Activated CD4-positive, alpha-beta memory T cell treated with anti-CD3 and anti-CD28 coated beads for 36 hours (primary cell): ENCODE measurements at regions of chr14 and their contacts with region 1.

Region 1: DNA sequence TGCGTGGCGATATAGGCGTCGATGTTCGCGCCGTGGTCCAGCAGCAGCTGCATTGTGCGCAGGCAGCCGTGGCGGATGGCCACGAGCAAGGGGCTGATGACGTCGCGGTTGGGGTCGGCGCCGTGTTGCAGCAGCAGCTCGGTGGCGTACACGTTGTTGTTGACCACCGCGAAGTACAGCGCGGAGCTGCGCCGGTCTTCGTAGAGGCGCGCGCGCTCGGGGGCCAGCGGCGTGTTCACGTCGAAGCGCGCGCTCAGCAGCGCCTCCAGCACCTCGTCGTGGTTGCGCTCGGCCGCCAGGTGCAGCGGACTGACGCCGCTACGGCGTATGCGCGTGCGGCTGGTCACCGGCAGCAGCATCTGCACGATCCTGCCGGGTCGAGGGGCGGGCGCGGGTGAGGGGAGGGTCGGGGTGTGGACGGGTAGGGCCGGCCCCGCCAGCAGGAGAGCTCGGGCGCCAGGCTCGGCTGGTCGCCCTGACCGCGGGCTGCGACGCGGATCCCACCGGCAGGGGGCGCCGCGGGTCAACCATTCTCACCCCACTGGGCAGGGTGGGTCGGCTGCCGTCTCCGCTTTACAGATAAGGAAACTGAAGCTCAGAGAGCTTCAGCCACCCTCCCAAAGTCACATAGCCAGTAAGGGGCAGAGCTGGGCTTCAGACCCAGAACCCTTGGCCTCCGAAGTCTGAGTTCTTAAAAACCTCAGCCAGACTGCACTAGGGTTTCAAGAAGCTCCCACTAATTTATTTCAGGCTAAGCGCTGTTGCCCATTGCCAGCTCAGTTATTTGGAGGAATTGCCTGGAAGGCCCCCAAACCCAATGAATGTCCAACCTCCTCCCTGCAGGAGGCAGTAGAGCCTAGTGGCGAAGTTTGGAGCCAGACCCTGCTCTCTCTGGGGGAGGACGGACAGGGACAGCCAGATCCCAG is 12.4 kb downstream of the FAM181A start:
- DNase-seq: peak; percentile 94
- H3K4me3 Mint-ChIP-seq: peak overlapping the region; percentile 61
- H3K27ac Mint-ChIP-seq: peak overlapping the region; percentile 56
- H3K4me1 Mint-ChIP-seq: peaks cover 13% of the 10 kb centered on the region
- H3K27me3 Mint-ChIP-seq: no peaks in the 10 kb centered on the region

Region 2: GRCh38 chr14:93923626-93924025 is 15.9 kb before region 1 on chr14:
- CTCF ChIA-PET with region 1: interaction called, 10 read pairs
- POLR2A ChIA-PET with region 1: no interaction called
- intact Hi-C with region 1: no loop called
- DNase-seq: no peak
- H3K4me3 Mint-ChIP-seq: no peak overlapping the region
- H3K27ac Mint-ChIP-seq: no peak overlapping the region
- H3K4me1 Mint-ChIP-seq: no peaks in the 10 kb centered on the region
- H3K27me3 Mint-ChIP-seq: no peaks in the 10 kb centered on the region

Region 3: GRCh38 chr14:93989939-93990338 is 50.4 kb after region 1 on chr14:
- CTCF ChIA-PET with region 1: interaction called, 425 read pairs
- POLR2A ChIA-PET with region 1: interaction called, 3 read pairs
- intact Hi-C with region 1: no loop called
- DNase-seq: no peak
- H3K4me3 Mint-ChIP-seq: no peak overlapping the region
- H3K27ac Mint-ChIP-seq: no peak overlapping the region
- H3K4me1 Mint-ChIP-seq: peaks cover 14% of the 10 kb centered on the region
- H3K27me3 Mint-ChIP-seq: no peaks in the 10 kb centered on the region

Region 4: GRCh38 chr14:94001501-94002396 is 62.2 kb after region 1 on chr14:
- CTCF ChIA-PET with region 1: interaction called, 309 read pairs
- POLR2A ChIA-PET with region 1: interaction called, 10 read pairs
- intact Hi-C with region 1: loop called (anchors 1 kb)
- DNase-seq: peak; percentile 72
- H3K4me3 Mint-ChIP-seq: no peak overlapping the region
- H3K27ac Mint-ChIP-seq: peak overlapping the region; percentile 50
- H3K4me1 Mint-ChIP-seq: peaks cover 29% of the 10 kb centered on the region
- H3K27me3 Mint-ChIP-seq: no peaks in the 10 kb centered on the region

Region 5: GRCh38 chr14:94026173-94026888 is 86.8 kb after region 1 on chr14 and contains the start of gene OTUB2:
- CTCF ChIA-PET with region 1: interaction called, 71 read pairs
- POLR2A ChIA-PET with region 1: interaction called, 6 read pairs
- intact Hi-C with region 1: no loop called
- DNase-seq: peak; percentile 99
- H3K4me3 Mint-ChIP-seq: peak within 1 kb of the TSS; percentile 64
- H3K27ac Mint-ChIP-seq: no peak within 1 kb of the TSS
- H3K4me1 Mint-ChIP-seq: peaks cover 43% of the 10 kb centered on the region
- H3K27me3 Mint-ChIP-seq: no peaks in the 10 kb centered on the region
- total RNA-seq, gene OTUB2: 2.0 to 2.9 TPM

Region 6: DNA sequence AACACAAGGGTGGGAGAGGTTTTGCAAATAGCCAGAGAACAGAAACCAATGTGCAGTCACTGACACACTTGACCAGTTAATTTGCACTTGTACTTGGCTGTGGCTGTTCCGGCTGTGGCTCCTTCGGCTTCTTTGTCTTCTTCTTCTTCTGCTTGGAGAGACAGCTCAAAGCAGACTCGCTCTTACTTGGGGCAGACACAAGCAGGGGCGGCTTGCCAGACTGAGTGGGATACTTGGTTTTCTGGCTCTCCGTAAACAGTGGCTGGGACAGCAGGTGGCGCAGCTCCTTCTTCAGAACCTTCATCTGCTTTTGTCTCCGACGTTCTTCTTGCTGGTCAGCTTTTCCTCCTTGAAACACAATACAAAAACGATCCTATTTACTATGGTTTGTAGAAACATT is 111.5 kb after region 1 on chr14:
- CTCF ChIA-PET with region 1: interaction called, 15 read pairs
- POLR2A ChIA-PET with region 1: no interaction called
- intact Hi-C with region 1: no loop called
- DNase-seq: peak; percentile 14
- H3K4me3 Mint-ChIP-seq: no peak overlapping the region
- H3K27ac Mint-ChIP-seq: peak overlapping the region; percentile 23
- H3K4me1 Mint-ChIP-seq: peaks cover 23% of the 10 kb centered on the region
- H3K27me3 Mint-ChIP-seq: no peaks in the 10 kb centered on the region

Region 7: GRCh38 chr14:94180655-94181271 is 241.2 kb after region 1 on chr14:
- CTCF ChIA-PET with region 1: interaction called, 20 read pairs
- POLR2A ChIA-PET with region 1: interaction called, 3 read pairs
- intact Hi-C with region 1: no loop called
- DNase-seq: no peak
- H3K4me3 Mint-ChIP-seq: peak overlapping the region; percentile 54
- H3K27ac Mint-ChIP-seq: peak overlapping the region; percentile 67
- H3K4me1 Mint-ChIP-seq: peaks cover 50% of the 10 kb centered on the region
- H3K27me3 Mint-ChIP-seq: no peaks in the 10 kb centered on the region